ENCODE measurements at regions of chr7 and their contacts with region 1.

Region 1: DNA sequence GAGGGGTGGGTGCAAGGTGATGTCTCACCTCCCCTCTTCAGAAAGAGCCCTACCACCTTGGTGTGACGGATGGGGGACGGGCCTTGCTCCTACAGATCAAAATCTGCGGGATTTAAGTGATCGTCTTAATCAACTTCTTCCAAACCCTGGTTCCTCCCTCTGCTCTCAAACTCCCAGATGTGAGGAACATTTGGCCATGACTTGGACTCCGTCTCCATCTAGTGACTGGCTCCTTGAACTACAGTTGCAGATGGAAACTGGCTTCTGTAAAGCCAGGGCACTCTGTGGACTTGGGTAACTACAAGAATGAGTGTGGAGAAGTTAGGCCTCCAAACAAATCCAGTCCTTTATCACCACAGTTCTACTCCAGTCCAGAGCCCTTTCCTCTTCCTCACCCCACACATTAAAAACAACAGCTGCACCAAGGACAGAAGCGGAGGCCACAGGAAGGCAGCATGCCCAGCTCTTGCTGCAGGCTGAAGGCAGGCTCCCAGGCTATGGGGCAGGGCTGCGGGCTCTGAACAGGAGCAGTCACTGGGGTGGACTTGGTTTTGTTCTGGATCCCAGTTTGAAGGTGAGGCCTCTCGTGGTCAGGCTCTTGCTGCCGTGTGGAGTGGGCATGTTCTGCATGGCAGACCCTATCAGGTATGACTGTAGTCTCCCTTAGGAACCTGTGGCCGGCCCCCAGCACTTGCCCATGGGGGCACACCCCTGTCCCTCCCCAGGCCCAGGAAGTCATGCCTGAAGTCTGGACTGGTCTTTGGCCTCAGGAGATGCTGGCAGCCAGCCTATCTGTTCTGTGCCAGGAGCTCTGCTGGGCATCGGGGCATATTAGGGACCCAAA is 79.4 kb downstream of the VWC2 start:
- DNase-seq: peak in 1 of 3 donors; percentile 50
- ATAC-seq: peak; percentile 69
- H3K4me3 ChIP-seq: no peak overlapping the region
- H3K4me1 ChIP-seq: no peaks in the 10 kb centered on the region
- CTCF ChIP-seq: peak; percentile 37

Region 2: GRCh38 chr7:48299580-48300169 is 1553.2 kb before region 1 on chr7:
- intact Hi-C with region 1: loop called in 1 of 2 experiments (anchors 10 kb)
- DNase-seq: peak in 2 of 3 donors; percentile 50 to 69
- ATAC-seq: peak; percentile 60
- H3K4me3 ChIP-seq: no peak overlapping the region
- H3K4me1 ChIP-seq: no peaks in the 10 kb centered on the region
- CTCF ChIP-seq: peak; percentile 33

Region 3: GRCh38 chr7:50393547-50394252 is 540.9 kb after region 1 on chr7:
- intact Hi-C with region 1: no loop called
- DNase-seq: peak in 1 of 3 donors; percentile 34
- ATAC-seq: peak; percentile 68
- H3K4me3 ChIP-seq: no peak overlapping the region
- H3K4me1 ChIP-seq: no peaks in the 10 kb centered on the region
- CTCF ChIP-seq: no peak